Activated T-helper 1 cell treated with anti-CD3 and anti-CD28 coated beads, Interleukin-12 subunit alpha, Interleukin-12 subunit beta, Interleukin-2, Interleukin-4 antibody, amounts not matched to agents 30 ng/mL and 10 ng/mL and 1 ng/mL, durations not matched to agents 14 hours and 24 hours and 36 hours (primary cell): ENCODE measurements at regions of chr10 and their contacts with region 1.

Region 1: DNA sequence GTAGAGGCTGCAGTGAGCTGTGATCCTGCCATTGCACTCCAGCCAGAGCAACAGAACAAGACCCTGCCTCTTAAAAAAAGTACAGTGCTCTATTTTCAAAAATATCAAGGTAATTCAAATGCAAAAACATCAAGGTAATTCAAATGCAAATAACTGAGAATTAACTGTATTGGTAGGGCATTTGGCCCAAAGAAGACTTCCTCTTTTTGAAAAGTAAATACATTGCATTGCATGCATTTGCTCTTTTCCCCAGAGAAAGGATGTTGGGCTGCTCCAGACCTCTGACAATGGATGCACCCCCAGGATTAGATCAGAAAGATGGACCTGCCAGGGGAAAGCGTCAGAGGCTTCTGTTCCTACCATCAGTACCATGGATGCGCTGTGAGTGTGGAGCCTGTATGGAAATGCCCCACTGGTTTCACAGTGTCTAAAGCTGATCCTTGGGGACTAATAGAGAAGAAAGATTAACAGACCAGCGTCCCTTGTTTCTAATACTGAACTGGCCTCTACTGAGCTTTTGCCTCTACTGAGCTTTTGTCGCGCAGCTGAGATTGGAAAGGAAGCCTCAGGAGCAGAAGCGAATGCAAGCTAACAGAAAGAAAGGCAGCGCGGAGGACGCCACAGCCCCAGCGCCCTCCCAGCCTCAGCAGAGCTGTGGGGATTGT is 93.5 kb upstream of the LYZL2 start:
- DNase-seq: no peak
- H3K4me3 Mint-ChIP-seq: no peak overlapping the region
- H3K27ac Mint-ChIP-seq: no peak overlapping the region
- H3K4me1 Mint-ChIP-seq: peaks cover 11% of the 10 kb centered on the region
- H3K27me3 Mint-ChIP-seq: no peaks in the 10 kb centered on the region

Region 2: GRCh38 chr10:30324448-30325110 is 398.5 kb before region 1 on chr10:
- intact Hi-C with region 1: no loop called
- DNase-seq: no peak
- H3K4me3 Mint-ChIP-seq: no peak overlapping the region
- H3K27ac Mint-ChIP-seq: no peak overlapping the region
- H3K4me1 Mint-ChIP-seq: peaks cover 5% of the 10 kb centered on the region
- H3K27me3 Mint-ChIP-seq: no peaks in the 10 kb centered on the region

Region 3: GRCh38 chr10:30639946-30640786 is 82.9 kb before region 1 on chr10:
- intact Hi-C with region 1: loop called (anchors 1 kb)
- DNase-seq: no peak
- H3K4me3 Mint-ChIP-seq: no peak overlapping the region
- H3K27ac Mint-ChIP-seq: no peak overlapping the region
- H3K4me1 Mint-ChIP-seq: peaks cover 3% of the 10 kb centered on the region
- H3K27me3 Mint-ChIP-seq: peaks cover 24% of the 10 kb centered on the region

Region 4: DNA sequence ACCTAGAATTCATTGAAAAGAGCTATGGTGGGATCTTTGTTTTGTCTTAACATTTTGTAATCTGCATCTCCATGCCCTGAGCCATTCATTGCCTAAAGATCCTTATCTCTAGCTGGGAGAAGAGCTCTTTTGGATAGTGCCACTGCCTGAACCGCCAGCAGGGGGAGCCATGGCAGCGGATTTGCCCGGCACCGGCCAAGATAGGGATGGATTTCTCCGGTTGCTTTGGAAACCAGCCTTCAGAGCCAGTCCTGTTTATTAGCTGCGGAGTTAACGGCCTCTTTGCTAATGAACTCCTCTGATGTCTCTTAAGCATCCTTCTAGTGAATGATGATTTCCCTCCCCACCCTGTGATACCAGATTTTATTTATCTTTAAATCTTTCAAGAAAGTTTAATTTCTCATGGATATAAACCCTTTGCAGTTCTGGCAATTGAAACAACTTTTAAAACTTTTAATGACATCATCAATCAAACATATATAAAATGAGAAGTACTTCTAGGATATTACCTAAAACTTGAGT is 35.3 kb before region 1 on chr10:
- intact Hi-C with region 1: loop called (anchors 1 kb)
- DNase-seq: peak; percentile 63
- H3K4me3 Mint-ChIP-seq: no peak overlapping the region
- H3K27ac Mint-ChIP-seq: no peak overlapping the region
- H3K4me1 Mint-ChIP-seq: peaks cover 44% of the 10 kb centered on the region
- H3K27me3 Mint-ChIP-seq: peaks cover 5% of the 10 kb centered on the region

Region 5: DNA sequence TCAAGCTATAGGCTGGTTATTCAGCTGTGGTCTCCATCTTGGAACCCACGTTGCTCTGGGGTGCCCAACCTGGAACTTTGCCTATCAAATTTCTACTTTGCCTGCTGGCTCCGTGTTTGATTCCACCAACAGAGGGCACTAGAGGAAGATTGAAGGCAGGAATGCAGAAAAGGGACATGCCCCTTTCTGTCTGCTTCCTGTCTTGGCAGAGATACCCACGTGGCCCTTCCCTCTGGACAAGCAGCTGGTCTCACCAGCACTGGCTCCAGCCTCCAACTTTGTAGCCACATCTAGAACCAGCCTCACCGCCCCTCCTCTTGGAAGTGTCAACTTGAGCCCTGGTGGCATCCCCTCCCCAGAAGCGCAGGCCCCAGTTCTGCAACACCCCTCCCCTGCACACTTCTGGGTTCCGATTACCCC is 360.7 kb after region 1 on chr10:
- intact Hi-C with region 1: loop called (anchors 1 kb)
- DNase-seq: peak; percentile 58
- H3K4me3 Mint-ChIP-seq: no peak overlapping the region
- H3K27ac Mint-ChIP-seq: peak overlapping the region; percentile 11
- H3K4me1 Mint-ChIP-seq: peaks cover 24% of the 10 kb centered on the region
- H3K27me3 Mint-ChIP-seq: peaks cover 4% of the 10 kb centered on the region

Region 6: GRCh38 chr10:31770307-31770902 is 1047.3 kb after region 1 on chr10:
- intact Hi-C with region 1: loop called (anchors 1 kb)
- DNase-seq: peak; percentile 22
- H3K4me3 Mint-ChIP-seq: no peak overlapping the region
- H3K27ac Mint-ChIP-seq: no peak overlapping the region
- H3K4me1 Mint-ChIP-seq: no peaks in the 10 kb centered on the region
- H3K27me3 Mint-ChIP-seq: no peaks in the 10 kb centered on the region